K562 (cell line): ENCODE measurements at regions of chr6 and their contacts with region 1.

Region 1: DNA sequence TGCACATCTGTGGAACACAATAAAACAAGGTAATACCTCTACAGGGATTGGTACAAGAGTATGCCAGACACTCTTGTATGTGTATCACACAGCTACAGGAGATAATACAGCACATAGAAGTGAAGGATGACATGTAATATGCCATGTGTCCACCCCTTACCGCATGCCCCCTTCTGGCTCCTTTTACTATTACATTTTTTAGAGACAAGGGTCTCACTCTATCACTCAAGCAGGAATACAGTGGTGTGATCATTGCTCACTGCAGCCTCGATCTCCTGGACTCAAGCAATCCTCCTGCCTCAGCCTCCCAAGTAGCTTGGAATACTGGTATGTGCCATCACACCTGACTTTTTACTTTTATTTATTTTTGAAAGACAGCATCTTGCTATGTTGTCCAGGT is 4.2 kb upstream of the NCR3 start:
- DNase-seq: peak; percentile 72 to 76 (median 74)
- ATAC-seq: peak; percentile 86
- H3K4me3 ChIP-seq: no peak overlapping the region
- H3K27ac ChIP-seq: no peak overlapping the region
- H3K4me1 ChIP-seq: peaks cover 7 to 16% of the 10 kb centered on the region in 2 experiments; a peak in 3 of 5 replicates
- H3K27me3 ChIP-seq: no peaks in the 10 kb centered on the region
- CTCF ChIP-seq: peak; percentile 68 to 81 (median 71)
- EP300 ChIP-seq: no peak
- POLR2A ChIP-seq: no peak
- RAD21 ChIP-seq: peak; percentile 69 to 85

Region 2: DNA sequence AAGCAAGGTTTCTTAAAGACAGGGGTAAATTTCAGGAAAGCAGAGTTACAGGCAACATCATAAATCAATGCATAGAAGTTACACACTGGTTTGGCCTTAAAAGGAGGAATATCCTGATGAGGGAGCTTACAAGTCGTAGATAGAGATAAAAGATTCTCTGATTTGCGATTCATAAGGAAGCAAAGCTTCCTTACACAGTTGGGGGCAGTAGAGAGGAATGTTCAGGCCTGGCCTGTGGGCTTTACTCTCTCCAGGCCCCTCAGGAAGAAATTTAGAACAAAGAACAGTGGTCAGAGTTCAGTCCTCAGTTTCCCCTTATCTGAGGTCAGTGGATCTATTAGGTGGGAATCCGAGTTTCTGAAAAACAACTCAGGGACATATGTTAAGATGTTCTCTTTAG is 344.4 kb before region 1 on chr6:
- CTCF ChIA-PET with region 1: no interaction called
- POLR2A ChIA-PET with region 1: no interaction called
- in situ Hi-C with region 1: no loop called
- intact Hi-C with region 1: no loop called
- DNase-seq: no peak
- ATAC-seq: no peak
- H3K4me3 ChIP-seq: no peak overlapping the region
- H3K27ac ChIP-seq: no peak overlapping the region
- H3K4me1 ChIP-seq: no peaks in the 10 kb centered on the region
- H3K27me3 ChIP-seq: no peaks in the 10 kb centered on the region; a peak in 1 of 5 replicates
- CTCF ChIP-seq: no peak
- EP300 ChIP-seq: no peak
- POLR2A ChIP-seq: no peak
- RAD21 ChIP-seq: no peak

Region 3: GRCh38 chr6:31403283-31403989 is 193.6 kb before region 1 on chr6 and contains the start of gene MICA:
- CTCF ChIA-PET with region 1: interaction called, 7 read pairs
- POLR2A ChIA-PET with region 1: no interaction called
- in situ Hi-C with region 1: loop called (anchors 5 kb)
- intact Hi-C with region 1: loop called (anchors 5 kb)
- DNase-seq: peak; percentile 96 to 99 (median 98)
- ATAC-seq: peak; percentile 86
- H3K4me3 ChIP-seq: peak within 1 kb of the TSS; percentile 50
- H3K27ac ChIP-seq: peak within 1 kb of the TSS; percentile 24
- H3K4me1 ChIP-seq: peaks cover 29 to 31% of the 10 kb centered on the region in 2 experiments; a peak in 4 of 5 replicates
- H3K27me3 ChIP-seq: no peaks in the 10 kb centered on the region
- CTCF ChIP-seq: no peak; a peak in 1 of 6 replicates
- EP300 ChIP-seq: no peak
- POLR2A ChIP-seq: peak; percentile 81
- RAD21 ChIP-seq: no peak
- polyA plus RNA-seq, gene MICA: 13.5 to 18.0 TPM

Region 4: DNA sequence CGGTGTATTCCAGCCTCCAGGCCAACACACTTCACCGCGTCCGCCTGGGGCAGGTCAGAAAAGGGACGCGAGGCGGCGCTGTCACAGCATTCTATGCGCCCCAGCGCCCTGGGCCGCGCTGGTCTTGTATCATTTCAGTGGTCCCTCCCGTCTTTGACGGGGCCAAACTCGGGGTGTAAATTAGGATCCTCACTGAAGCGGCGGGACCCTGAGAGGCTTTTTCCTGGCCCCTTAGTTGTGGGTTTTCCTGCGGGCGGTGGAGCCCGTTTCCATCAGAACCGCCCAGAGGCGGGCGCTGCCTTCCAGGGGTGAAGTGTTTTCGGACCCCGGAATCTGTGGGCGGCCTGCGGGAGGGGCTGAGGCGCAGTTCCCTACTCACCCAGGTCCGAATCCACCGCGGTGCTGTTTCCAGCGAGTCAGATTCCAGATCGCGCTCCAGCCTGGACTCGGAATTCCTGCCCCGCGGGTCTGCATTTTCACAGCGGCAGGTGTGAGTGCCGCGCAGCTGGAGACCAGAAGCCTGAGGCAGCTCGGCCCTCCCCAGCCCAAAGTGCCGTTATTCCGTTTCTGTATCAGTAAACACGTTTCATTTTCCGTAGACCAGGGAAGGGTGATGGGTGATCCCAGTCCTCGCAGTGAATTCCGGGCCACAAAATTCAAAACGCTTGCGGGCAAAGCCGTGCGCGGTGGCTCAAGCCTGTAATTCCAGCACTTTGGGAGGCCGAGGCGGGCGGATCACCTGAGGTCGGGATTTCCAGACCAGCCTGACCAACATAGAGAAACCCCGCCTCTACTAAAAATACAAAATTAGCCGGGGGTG is 102.9 kb before region 1 on chr6:
- CTCF ChIA-PET with region 1: interaction called, 16 read pairs
- POLR2A ChIA-PET with region 1: interaction called, 6 read pairs
- in situ Hi-C with region 1: loop called (anchors 5 kb)
- intact Hi-C with region 1: loop called (anchors 1 kb)
- DNase-seq: peak; percentile 73 to 97 (median 80)
- ATAC-seq: peak; percentile 81
- H3K4me3 ChIP-seq: peak overlapping the region; percentile 54
- H3K27ac ChIP-seq: peak overlapping the region; percentile 69
- H3K4me1 ChIP-seq: peaks cover 42 to 53% of the 10 kb centered on the region in 2 experiments
- H3K27me3 ChIP-seq: no peaks in the 10 kb centered on the region
- CTCF ChIP-seq: peak; percentile 97 to 100 (median 99)
- EP300 ChIP-seq: peak; percentile 35; the same call in 1 of the 2 replicates
- POLR2A ChIP-seq: peak; percentile 59
- RAD21 ChIP-seq: peak; percentile 80 to 95

Region 5: DNA sequence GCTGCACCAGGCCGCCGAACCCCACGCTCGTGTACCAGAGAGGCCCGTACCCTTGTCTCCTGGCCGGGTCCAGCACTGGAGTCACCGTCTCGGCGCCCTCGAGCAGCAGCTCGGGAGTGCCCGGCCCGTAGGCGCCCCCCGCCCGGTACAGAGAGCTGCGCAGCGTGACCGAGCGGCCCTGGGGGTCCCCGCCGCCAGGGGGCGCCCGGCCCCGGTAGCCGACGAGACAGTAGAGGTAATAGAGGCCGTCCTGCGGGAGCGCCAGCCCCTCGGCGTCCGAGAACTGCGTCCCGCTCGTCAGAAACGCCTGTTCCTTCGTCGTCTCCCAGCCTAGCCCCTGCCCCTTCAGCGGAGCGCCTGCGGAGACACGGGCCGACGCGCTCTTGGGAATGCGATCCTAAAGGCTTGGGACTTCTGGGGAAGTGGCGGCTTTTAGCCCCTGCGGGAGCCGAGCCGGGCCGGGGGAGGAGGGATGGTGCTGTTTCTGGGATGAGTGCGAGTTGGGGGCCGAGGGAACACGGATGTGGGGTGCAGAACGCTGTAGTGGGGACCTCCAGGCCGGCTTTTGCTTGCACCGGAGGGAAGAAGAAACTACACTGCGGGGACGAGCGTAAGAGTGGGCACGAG is 16.1 kb before region 1 on chr6:
- CTCF ChIA-PET with region 1: interaction called, 7 read pairs
- POLR2A ChIA-PET with region 1: interaction called, 20 read pairs
- in situ Hi-C with region 1: no loop called
- intact Hi-C with region 1: loop called (anchors 1 kb)
- DNase-seq: peak; percentile 93 to 98 (median 97)
- ATAC-seq: peak; percentile 98
- H3K4me3 ChIP-seq: peak overlapping the region; percentile 62
- H3K27ac ChIP-seq: peak overlapping the region; percentile 45; the same call in 1 of the 3 replicates
- H3K4me1 ChIP-seq: peaks cover 3 to 24% of the 10 kb centered on the region in 2 experiments; a peak in 4 of 5 replicates
- H3K27me3 ChIP-seq: no peaks in the 10 kb centered on the region
- CTCF ChIP-seq: peak; percentile 98 to 99 (median 98)
- EP300 ChIP-seq: peak; percentile 37
- POLR2A ChIP-seq: peak; percentile 81
- RAD21 ChIP-seq: peak; percentile 86 to 88

Region 6: GRCh38 chr6:31609519-31610406 is 12.8 kb after region 1 on chr6:
- CTCF ChIA-PET with region 1: no interaction called
- POLR2A ChIA-PET with region 1: interaction called, 11 read pairs
- in situ Hi-C with region 1: no loop called
- intact Hi-C with region 1: no loop called
- DNase-seq: peak in 1 of 4 experiments; percentile 42
- ATAC-seq: peak; percentile 65
- H3K4me3 ChIP-seq: no peak overlapping the region
- H3K27ac ChIP-seq: peak overlapping the region; percentile 42; the same call in 2 of the 3 replicates
- H3K4me1 ChIP-seq: peaks cover 13 to 22% of the 10 kb centered on the region in 2 experiments
- H3K27me3 ChIP-seq: no peaks in the 10 kb centered on the region
- CTCF ChIP-seq: peak in 2 of 3 experiments; percentile 9 to 27; a peak in 2 of 6 replicates
- EP300 ChIP-seq: no peak
- POLR2A ChIP-seq: no peak
- RAD21 ChIP-seq: peak in 1 of 2 experiments; percentile 42; a peak in 1 of 4 replicates

Region 7: DNA sequence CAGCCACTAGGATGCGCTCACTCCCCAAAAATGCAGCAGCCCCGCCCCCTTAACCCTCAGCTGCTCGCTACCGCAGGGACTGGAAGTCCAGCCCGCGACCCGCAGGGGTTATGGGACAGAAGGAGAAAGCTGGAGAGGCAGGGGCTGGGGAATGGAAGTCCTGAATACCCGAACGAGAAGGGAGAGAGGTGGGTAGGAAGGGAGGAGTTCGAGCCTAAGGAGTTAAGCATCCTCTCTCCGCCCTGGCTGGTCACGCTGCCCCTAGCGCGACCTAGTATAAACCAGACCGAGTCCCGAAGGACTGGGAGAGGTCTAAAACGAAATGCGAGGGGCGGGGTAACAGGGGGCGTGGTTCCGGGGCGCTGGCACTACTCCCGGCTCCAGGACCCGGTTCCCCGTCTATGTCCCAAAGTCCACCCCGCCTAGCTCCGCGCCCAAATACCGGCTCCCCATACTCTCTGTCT is 132.5 kb after region 1 on chr6:
- CTCF ChIA-PET with region 1: no interaction called
- POLR2A ChIA-PET with region 1: no interaction called
- in situ Hi-C with region 1: no loop called
- intact Hi-C with region 1: no loop called
- DNase-seq: peak; percentile 91 to 97 (median 94)
- ATAC-seq: peak; percentile 84
- H3K4me3 ChIP-seq: peak overlapping the region; percentile 65
- H3K27ac ChIP-seq: peak overlapping the region; percentile 75
- H3K4me1 ChIP-seq: peaks cover 53 to 67% of the 10 kb centered on the region in 2 experiments
- H3K27me3 ChIP-seq: no peaks in the 10 kb centered on the region
- CTCF ChIP-seq: peak; percentile 12 to 99 (median 95); a peak in 5 of 6 replicates
- EP300 ChIP-seq: no peak; the same call in 1 of the 2 replicates
- POLR2A ChIP-seq: no peak; the same call in 1 of the 2 replicates
- RAD21 ChIP-seq: peak; percentile 99

Region 8: GRCh38 chr6:31827286-31828079 is 230.5 kb after region 1 on chr6 and contains the start of gene HSPA1B:
- CTCF ChIA-PET with region 1: no interaction called
- POLR2A ChIA-PET with region 1: no interaction called
- in situ Hi-C with region 1: no loop called
- intact Hi-C with region 1: no loop called
- DNase-seq: peak; percentile 99 to 100 (median 100)
- ATAC-seq: peak; percentile 86
- H3K4me3 ChIP-seq: peak within 1 kb of the TSS; percentile 56
- H3K27ac ChIP-seq: peak within 1 kb of the TSS; percentile 78
- H3K4me1 ChIP-seq: peaks cover 41% of the 10 kb centered on the region in 2 experiments
- H3K27me3 ChIP-seq: no peaks in the 10 kb centered on the region
- CTCF ChIP-seq: peak in 1 of 3 experiments; percentile 15; a peak in 2 of 6 replicates
- EP300 ChIP-seq: peak; percentile 89
- POLR2A ChIP-seq: peak; percentile 100
- RAD21 ChIP-seq: peak; percentile 34 to 39; a peak in 2 of 4 replicates
- polyA plus RNA-seq, gene HSPA1B: 0.27 to 0.62 TPM